ENCODE measurements at regions of chr18 and their contacts with region 1.

Region 1: GRCh38 chr18:5380586-5380985 is 85.1 kb upstream of the ZBTB14 start:
- DNase-seq: no peak
- H3K4me3 ChIP-seq: no peak overlapping the region
- H3K27ac ChIP-seq: no peak overlapping the region
- H3K4me1 ChIP-seq: no peaks in the 10 kb centered on the region
- H3K27me3 ChIP-seq: no peaks in the 10 kb centered on the region
- CTCF ChIP-seq: no peak
- EP300 ChIP-seq: no peak
- POLR2A ChIP-seq: no peak

Region 2: DNA sequence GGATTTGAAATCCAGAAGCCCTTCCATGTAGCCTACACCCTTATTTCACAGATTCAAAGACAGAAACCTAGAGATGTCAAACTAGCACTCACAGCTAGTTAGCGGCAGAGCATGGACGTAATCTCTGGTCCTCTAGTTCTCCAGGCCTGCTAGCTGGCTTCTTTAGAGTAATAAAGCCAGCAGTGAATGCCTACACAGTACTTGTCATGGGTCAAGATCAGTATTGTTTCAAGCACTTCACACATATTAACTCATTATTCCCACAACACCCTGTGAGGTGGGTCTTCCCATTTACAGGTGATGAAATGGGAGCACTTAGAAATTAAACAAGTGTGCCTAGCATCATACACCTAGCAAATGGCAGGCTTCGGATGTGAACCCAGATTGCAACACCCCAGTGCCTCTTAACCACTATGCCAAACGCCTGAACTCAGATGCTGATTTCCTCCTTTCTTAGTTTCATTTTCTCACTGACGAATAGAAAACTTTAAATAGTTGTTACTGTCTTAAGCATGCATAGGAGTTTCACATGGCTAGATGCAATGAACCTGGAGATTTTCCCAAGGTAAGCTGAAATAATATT is 70.6 kb before region 1 on chr18:
- intact Hi-C with region 1: loop called (anchors 10 kb)
- DNase-seq: no peak
- H3K4me3 ChIP-seq: peak overlapping the region in 1 of 4 donors; percentile 10
- H3K27ac ChIP-seq: no peak overlapping the region
- H3K4me1 ChIP-seq: no peaks in the 10 kb centered on the region
- H3K27me3 ChIP-seq: no peaks in the 10 kb centered on the region
- CTCF ChIP-seq: no peak
- EP300 ChIP-seq: no peak
- POLR2A ChIP-seq: no peak

Measured in sigmoid colon (tissue), 7 donors.